ENCODE measurements at regions of chr3 and their contacts with region 1.

Region 1: DNA sequence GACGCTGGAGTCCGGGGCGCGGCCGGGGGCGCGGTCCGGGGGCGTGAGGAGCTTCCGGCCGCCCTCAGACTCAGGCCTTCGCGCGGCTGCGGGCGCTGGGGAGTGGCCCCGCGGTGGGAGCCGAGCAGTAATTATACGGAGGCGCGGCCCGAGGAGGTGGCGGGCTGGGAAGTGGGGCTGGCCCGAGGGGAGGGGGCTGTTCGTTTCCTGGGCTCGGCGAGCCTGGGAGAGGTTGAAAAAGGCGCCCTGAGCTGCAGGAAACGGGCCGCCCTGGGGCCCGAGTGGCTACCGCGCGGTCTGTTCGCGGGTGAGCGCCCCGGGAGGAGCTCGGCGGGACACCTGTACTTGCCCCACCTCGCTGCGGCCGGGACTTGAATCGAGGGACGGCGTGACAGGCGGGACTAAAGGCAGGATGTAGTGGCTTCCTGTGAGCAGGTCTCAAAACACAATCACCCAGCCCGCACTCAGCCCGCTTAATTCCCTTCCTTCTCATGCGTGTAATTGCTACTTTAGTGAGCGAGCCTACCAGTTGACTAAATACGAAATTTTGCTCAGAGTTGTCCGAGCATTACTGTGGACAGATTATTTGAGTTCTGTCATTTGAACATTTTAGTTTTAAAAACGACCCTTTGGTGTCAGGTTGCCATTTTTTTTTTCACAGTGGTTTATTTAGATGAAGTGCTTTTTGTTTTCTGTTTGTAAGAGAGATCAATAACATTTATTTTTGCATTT is 860 bp downstream of the RASA2 start:
- DNase-seq: peak; percentile 73 to 95 (median 82)
- ATAC-seq: peak; percentile 64
- H3K4me3 ChIP-seq: peak overlapping the region; percentile 75
- H3K4me3 Mint-ChIP-seq: peak overlapping the region; percentile 87
- H3K27ac ChIP-seq: peak overlapping the region; percentile 75 to 97
- H3K27ac Mint-ChIP-seq: peak overlapping the region; percentile 82
- H3K4me1 ChIP-seq: peaks cover 33% of the 10 kb centered on the region
- H3K4me1 Mint-ChIP-seq: peaks cover 73% of the 10 kb centered on the region
- H3K27me3 ChIP-seq: no peaks in the 10 kb centered on the region
- H3K27me3 Mint-ChIP-seq: no peaks in the 10 kb centered on the region
- CTCF ChIP-seq: no peak

Region 2: GRCh38 chr3:141231101-141231935 is 256.4 kb before region 1 on chr3 and contains the start of gene PXYLP1:
- CTCF ChIA-PET with region 1: no interaction called
- POLR2A ChIA-PET with region 1: interaction called, 23 read pairs
- intact Hi-C with region 1: no loop called
- DNase-seq: peak; percentile 80 to 94 (median 89)
- ATAC-seq: peak; percentile 89
- H3K4me3 ChIP-seq: peak within 1 kb of the TSS; percentile 88
- H3K4me3 Mint-ChIP-seq: peak within 1 kb of the TSS; percentile 96
- H3K27ac ChIP-seq: peak within 1 kb of the TSS; percentile 76 to 86
- H3K27ac Mint-ChIP-seq: peak within 1 kb of the TSS; percentile 96
- H3K4me1 ChIP-seq: peaks cover 51% of the 10 kb centered on the region
- H3K4me1 Mint-ChIP-seq: peaks cover 66% of the 10 kb centered on the region
- H3K27me3 ChIP-seq: no peaks in the 10 kb centered on the region
- H3K27me3 Mint-ChIP-seq: no peaks in the 10 kb centered on the region
- CTCF ChIP-seq: peak; percentile 38
- total RNA-seq, gene PXYLP1: 21.2 to 22.6 TPM

Region 3: GRCh38 chr3:141412087-141412935 is 75.4 kb before region 1 on chr3:
- CTCF ChIA-PET with region 1: no interaction called
- POLR2A ChIA-PET with region 1: interaction called, 22 read pairs
- intact Hi-C with region 1: no loop called
- DNase-seq: peak; percentile 33 to 87 (median 48)
- ATAC-seq: peak; percentile 69
- H3K4me3 ChIP-seq: peak overlapping the region; percentile 31
- H3K4me3 Mint-ChIP-seq: peak overlapping the region; percentile 82
- H3K27ac ChIP-seq: peak overlapping the region; percentile 65 to 87
- H3K27ac Mint-ChIP-seq: peak overlapping the region; percentile 98
- H3K4me1 ChIP-seq: peaks cover 67% of the 10 kb centered on the region
- H3K4me1 Mint-ChIP-seq: peaks cover 80% of the 10 kb centered on the region
- H3K27me3 ChIP-seq: no peaks in the 10 kb centered on the region
- H3K27me3 Mint-ChIP-seq: no peaks in the 10 kb centered on the region
- CTCF ChIP-seq: no peak

Region 4: DNA sequence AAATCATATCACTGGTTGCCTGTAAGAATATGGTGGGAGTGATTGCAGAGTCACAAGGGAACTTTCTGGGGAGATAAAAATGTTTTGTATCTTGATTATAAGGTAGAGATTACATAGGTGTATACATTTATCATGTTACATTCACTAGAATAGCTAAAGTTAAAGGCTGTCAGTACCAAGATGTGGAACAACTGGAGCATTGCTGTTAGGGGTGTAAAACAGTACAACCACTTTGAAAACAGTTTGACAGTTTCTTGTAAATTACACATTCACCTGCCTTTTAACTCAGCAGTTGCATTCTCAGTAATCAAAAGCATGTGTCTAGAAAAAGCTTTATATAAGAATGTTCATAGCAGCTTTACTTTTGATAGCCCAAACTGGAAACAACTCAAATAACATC is 26.7 kb after region 1 on chr3:
- CTCF ChIA-PET with region 1: no interaction called
- POLR2A ChIA-PET with region 1: interaction called, 20 read pairs
- intact Hi-C with region 1: no loop called
- DNase-seq: no peak
- ATAC-seq: no peak
- H3K4me3 ChIP-seq: no peak overlapping the region
- H3K4me3 Mint-ChIP-seq: no peak overlapping the region
- H3K27ac ChIP-seq: no peak overlapping the region
- H3K27ac Mint-ChIP-seq: peak overlapping the region; percentile 54
- H3K4me1 ChIP-seq: peaks cover 13% of the 10 kb centered on the region
- H3K4me1 Mint-ChIP-seq: peaks cover 75% of the 10 kb centered on the region
- H3K27me3 ChIP-seq: no peaks in the 10 kb centered on the region
- H3K27me3 Mint-ChIP-seq: no peaks in the 10 kb centered on the region
- CTCF ChIP-seq: no peak

Region 5: GRCh38 chr3:141544697-141545096 is 57.0 kb after region 1 on chr3:
- CTCF ChIA-PET with region 1: no interaction called
- POLR2A ChIA-PET with region 1: interaction called, 23 read pairs
- intact Hi-C with region 1: no loop called
- DNase-seq: peak in 4 of 14 experiments; percentile 8 to 84 (median 70)
- ATAC-seq: peak; percentile 91
- H3K4me3 ChIP-seq: peak overlapping the region; percentile 17
- H3K4me3 Mint-ChIP-seq: peak overlapping the region; percentile 74
- H3K27ac ChIP-seq: peak overlapping the region; percentile 40
- H3K27ac Mint-ChIP-seq: peak overlapping the region; percentile 82
- H3K4me1 ChIP-seq: no peaks in the 10 kb centered on the region
- H3K4me1 Mint-ChIP-seq: peaks cover 89% of the 10 kb centered on the region
- H3K27me3 ChIP-seq: no peaks in the 10 kb centered on the region
- H3K27me3 Mint-ChIP-seq: no peaks in the 10 kb centered on the region
- CTCF ChIP-seq: no peak

Region 6: DNA sequence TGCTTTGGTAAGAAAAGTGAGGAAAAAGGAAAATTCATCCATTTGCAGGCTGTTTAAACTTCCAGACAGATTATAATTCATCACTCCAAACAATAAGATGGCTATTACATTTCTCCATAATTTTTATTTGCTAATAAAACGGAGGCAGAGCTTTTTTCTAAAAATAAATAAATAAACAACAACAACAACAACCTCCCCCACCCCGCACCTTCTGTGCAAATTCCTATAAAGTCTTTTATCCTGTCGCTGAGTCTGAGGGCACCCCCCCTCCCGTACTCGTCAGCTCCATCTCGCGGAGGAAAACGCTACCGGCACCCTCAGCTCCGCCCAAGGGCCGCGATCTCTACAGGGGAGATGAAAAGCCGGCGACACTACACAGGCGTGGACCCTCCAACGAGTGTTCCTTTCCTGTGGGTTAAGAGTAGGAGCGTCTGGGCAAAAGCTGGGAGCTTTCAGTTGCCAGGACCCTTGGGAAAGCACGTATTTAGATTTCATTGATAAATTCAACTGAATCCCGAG is 387.7 kb after region 1 on chr3:
- CTCF ChIA-PET with region 1: no interaction called
- POLR2A ChIA-PET with region 1: interaction called, 6 read pairs
- intact Hi-C with region 1: loop called in 1 of 2 experiments (anchors 10 kb)
- DNase-seq: peak; percentile 71 to 91 (median 78)
- ATAC-seq: peak; percentile 65
- H3K4me3 ChIP-seq: peak overlapping the region; percentile 83
- H3K4me3 Mint-ChIP-seq: peak overlapping the region; percentile 92
- H3K27ac ChIP-seq: peak overlapping the region; percentile 90 to 98
- H3K27ac Mint-ChIP-seq: peak overlapping the region; percentile 93
- H3K4me1 ChIP-seq: peaks cover 11% of the 10 kb centered on the region
- H3K4me1 Mint-ChIP-seq: peaks cover 29% of the 10 kb centered on the region
- H3K27me3 ChIP-seq: no peaks in the 10 kb centered on the region
- H3K27me3 Mint-ChIP-seq: no peaks in the 10 kb centered on the region
- CTCF ChIP-seq: peak; percentile 90